Activated CD4-positive, alpha-beta T cell treated with anti-CD3 and anti-CD28 coated beads for 36 hours (primary cell): ENCODE measurements at regions of chr1 and their contacts with region 1.

Region 1: DNA sequence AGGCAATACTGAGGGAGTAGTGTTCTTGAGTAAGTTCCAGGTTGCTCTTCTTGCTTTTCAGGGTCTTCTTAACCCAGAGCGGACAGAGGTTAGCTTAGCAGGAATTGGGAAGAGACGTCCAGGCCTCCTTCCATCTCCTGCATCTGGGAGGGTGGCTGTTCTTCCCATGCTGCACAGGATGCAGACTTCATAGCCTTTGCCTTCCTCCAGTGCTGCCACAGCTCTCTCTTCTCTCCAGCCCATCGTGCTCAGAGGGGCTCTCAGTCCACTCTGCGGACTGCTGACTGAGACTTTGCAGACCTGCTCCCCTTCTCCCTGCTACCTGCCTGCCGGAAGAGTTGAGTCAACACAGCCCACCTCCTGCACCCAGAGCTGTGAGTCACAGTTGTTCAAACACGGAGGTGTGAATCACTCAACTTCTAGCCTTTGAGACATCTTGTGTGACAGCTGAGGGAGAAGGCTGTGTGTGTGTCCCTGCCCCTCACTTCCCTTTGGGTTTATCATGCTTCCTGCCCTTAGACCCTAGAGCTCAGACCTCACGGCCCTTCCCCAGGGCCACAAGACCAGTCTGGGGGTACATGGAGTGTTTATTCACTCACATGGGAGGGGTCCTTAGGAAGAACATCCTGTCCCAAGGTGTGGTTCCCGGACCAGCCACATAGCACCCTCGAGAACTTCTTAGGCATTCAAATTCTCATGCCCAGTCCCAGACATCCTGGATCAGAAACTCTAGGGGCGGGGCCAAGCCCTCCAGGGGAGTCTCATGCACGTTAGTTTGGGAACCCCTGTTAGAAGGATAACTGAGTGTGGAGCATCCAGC is 158.3 kb upstream of the CACNA1E start:
- DNase-seq: peak; percentile 80
- ATAC-seq: peak; percentile 100
- H3K4me3 Mint-ChIP-seq: no peak overlapping the region
- H3K27ac Mint-ChIP-seq: no peak overlapping the region
- H3K4me1 Mint-ChIP-seq: peaks cover 14% of the 10 kb centered on the region
- H3K27me3 Mint-ChIP-seq: peaks cover 6% of the 10 kb centered on the region

Region 2: GRCh38 chr1:181397845-181398244 is 72.8 kb after region 1 on chr1:
- CTCF ChIA-PET with region 1: interaction called, 3 read pairs
- POLR2A ChIA-PET with region 1: no interaction called
- intact Hi-C with region 1: loop called in 1 of 2 experiments (anchors 2 kb)
- DNase-seq: peak; percentile 17
- ATAC-seq: peak; percentile 27
- H3K4me3 Mint-ChIP-seq: no peak overlapping the region
- H3K27ac Mint-ChIP-seq: peak overlapping the region; percentile 76
- H3K4me1 Mint-ChIP-seq: peaks cover 31% of the 10 kb centered on the region
- H3K27me3 Mint-ChIP-seq: no peaks in the 10 kb centered on the region